Dendritic cell treated with granulocyte-macrophage colony-stimulating factor and Interleukin-4, amounts not matched to agents 40 ng/mL and 50 ng/mL, for 4 days (primary cell): ENCODE measurements at regions of chr1 and their contacts with region 1.

Region 1: GRCh38 chr1:90986953-90987352 is 34.9 kb downstream of the ZNF644 start:
- H3K4me3 Mint-ChIP-seq: no peak overlapping the region
- H3K27ac Mint-ChIP-seq: peak overlapping the region; percentile 28
- H3K4me1 Mint-ChIP-seq: peaks cover 73% of the 10 kb centered on the region
- H3K27me3 Mint-ChIP-seq: no peaks in the 10 kb centered on the region

Region 2: GRCh38 chr1:91021686-91022517 is 34.9 kb after region 1 on chr1 and contains the start of gene ZNF644:
- intact Hi-C with region 1: loop called (anchors 2 kb)
- H3K4me3 Mint-ChIP-seq: peak within 1 kb of the TSS; percentile 89
- H3K27ac Mint-ChIP-seq: peak within 1 kb of the TSS; percentile 99
- H3K4me1 Mint-ChIP-seq: peaks cover 58% of the 10 kb centered on the region
- H3K27me3 Mint-ChIP-seq: no peaks in the 10 kb centered on the region